Right lobe of liver (tissue), 6 donors: ENCODE measurements at regions of chr9 and their contacts with region 1.

Region 1: GRCh38 chr9:127344368-127345000 is 52.5 kb upstream of the SLC2A8 start:
- DNase-seq: no peak
- ATAC-seq: no peak
- H3K4me3 ChIP-seq: no peak overlapping the region
- H3K27ac ChIP-seq: no peak overlapping the region
- H3K4me1 ChIP-seq: no peaks in the 10 kb centered on the region
- H3K27me3 ChIP-seq: no peaks in the 10 kb centered on the region
- CTCF ChIP-seq: no peak
- POLR2A ChIP-seq: no peak

Region 2: GRCh38 chr9:127112056-127112455 is 232.4 kb before region 1 on chr9:
- intact Hi-C with region 1: no loop called
- DNase-seq: no peak
- ATAC-seq: peak in 1 of 4 donors; percentile 12
- H3K4me3 ChIP-seq: no peak overlapping the region
- H3K27ac ChIP-seq: no peak overlapping the region
- H3K4me1 ChIP-seq: no peaks in the 10 kb centered on the region
- H3K27me3 ChIP-seq: no peaks in the 10 kb centered on the region
- CTCF ChIP-seq: no peak
- POLR2A ChIP-seq: no peak

Region 3: GRCh38 chr9:127253446-127253845 is 91.0 kb before region 1 on chr9:
- intact Hi-C with region 1: no loop called
- DNase-seq: no peak
- ATAC-seq: no peak
- H3K4me3 ChIP-seq: no peak overlapping the region
- H3K27ac ChIP-seq: no peak overlapping the region
- H3K4me1 ChIP-seq: no peaks in the 10 kb centered on the region
- H3K27me3 ChIP-seq: no peaks in the 10 kb centered on the region
- CTCF ChIP-seq: no peak
- POLR2A ChIP-seq: no peak

Region 4: GRCh38 chr9:127393645-127394044 is 49.2 kb after region 1 on chr9:
- intact Hi-C with region 1: loop called in 1 of 2 experiments (anchors 5 kb)
- DNase-seq: no peak
- ATAC-seq: no peak
- H3K4me3 ChIP-seq: no peak overlapping the region
- H3K27ac ChIP-seq: no peak overlapping the region
- H3K4me1 ChIP-seq: peaks cover 0 to 16% (median 0%) of the 10 kb centered on the region in 4 donors
- H3K27me3 ChIP-seq: no peaks in the 10 kb centered on the region
- CTCF ChIP-seq: no peak
- POLR2A ChIP-seq: no peak